Cardiac septum (tissue), 1 donor: ENCODE measurements at regions of chr1 and their contacts with region 1.

Region 1: DNA sequence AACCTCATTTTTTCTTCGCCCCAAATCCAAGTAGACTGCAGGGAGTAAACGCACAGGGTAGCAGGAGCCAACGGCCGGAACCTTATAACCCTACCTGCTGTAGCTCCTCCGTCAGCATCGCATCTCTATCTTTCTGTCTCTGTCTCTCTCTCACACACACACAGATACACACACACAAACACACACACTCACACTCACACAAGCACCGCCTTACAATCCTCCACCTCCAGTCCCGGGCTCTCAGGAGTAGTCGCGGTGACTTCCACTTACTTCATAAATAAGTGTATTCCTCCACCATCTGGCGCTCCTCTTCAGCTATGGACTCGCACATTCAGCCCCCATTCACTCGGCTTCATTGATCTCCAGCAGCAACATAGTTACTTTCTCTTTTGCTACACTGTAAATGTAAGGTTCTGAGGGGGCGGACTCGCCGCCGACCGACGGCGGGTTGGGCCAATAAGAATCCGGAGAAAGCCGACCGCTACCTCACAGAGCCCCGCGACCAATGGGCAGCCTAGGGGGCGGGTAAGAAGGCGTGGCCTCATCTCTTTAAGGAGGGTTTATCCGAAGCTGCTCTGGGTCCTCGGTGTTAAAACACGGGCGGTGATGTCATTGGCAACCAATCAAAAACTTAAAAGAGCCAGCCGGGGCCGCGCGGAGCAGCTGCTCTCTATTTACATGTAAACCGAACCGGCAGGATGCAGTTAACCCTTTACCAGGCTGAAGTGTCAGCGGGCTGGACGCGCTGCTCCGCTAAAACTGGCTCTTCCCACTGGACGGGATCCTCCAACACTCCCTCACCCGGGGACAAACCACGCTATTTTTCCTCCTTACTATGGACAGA is at the start of gene DUSP10:
- DNase-seq: peak; percentile 99
- total RNA-seq, gene DUSP10: 2.8 TPM

Region 2: DNA sequence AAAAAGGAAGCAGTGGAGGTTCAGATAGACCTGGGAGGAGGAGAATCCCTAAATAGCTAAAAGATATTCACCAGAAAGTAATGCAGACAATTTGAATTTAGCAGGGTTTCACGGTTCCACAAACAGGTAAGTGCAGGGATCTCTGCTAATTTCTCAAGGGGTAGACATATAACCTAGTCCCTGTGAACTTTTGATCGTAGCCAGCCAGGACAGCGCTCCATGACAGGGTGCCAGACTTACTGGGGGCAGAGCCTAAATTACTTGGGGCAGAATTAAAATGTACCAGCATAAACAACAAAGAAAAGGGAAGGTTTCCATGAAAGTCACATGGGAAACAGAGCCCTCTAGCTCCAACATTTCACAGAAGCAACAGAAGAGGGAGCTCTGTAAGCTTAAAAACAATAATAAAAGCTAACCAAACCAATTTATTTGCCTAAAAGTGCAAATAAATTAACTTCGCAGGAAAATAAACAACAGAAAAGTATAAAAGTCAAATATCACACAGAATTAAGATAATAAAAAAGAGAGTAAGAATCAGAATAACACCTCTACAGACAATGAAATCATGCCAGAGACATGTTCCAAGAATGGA is 198.3 kb before region 1 on chr1:
- intact Hi-C with region 1: loop called (anchors 10 kb)
- DNase-seq: no peak

Region 3: GRCh38 chr1:221693087-221693486 is 48.8 kb before region 1 on chr1:
- intact Hi-C with region 1: no loop called
- DNase-seq: no peak

Region 4: GRCh38 chr1:221794079-221794670 is 52.2 kb after region 1 on chr1:
- intact Hi-C with region 1: no loop called
- DNase-seq: no peak

Region 5: GRCh38 chr1:221878134-221878533 is 136.2 kb after region 1 on chr1:
- intact Hi-C with region 1: no loop called
- DNase-seq: no peak

Region 6: GRCh38 chr1:222171005-222171404 is 429.1 kb after region 1 on chr1:
- intact Hi-C with region 1: loop called (anchors 5 kb)
- DNase-seq: no peak

Region 7: DNA sequence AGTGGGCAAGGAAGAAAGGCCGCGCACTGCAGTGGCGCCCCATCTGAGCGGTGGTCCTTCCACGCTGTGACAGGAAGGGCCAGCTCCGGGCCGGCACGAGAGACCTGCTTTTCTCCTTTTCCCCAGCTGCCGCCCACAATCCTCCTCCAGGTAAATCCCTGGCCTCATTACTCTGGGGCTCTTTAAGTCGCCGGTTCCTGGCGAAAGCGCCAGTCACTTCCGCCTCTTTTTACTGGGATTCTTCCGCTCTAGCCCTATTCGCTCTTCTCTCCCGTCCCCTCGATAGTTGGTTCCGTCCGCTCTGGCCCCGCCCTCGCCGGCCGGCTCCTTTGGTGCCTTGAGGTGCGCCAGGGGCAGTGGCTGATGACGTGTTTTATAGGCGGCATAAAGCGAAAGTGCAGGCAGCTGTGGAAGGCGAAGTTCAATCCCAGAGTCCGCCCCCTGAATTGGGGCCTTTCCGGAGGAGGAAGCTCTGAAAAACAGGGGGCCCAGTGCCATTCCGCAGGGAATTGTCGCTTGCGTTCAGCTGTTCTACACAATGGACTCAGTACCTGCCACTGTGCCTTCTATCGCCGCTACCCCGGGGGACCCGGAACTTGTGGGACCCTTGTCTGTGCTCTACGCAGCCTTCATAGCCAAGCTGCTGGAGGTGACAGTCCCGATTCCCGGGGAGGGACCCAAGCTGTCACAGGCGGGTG is 902.2 kb after region 1 on chr1:
- intact Hi-C with region 1: loop called (anchors 10 kb)
- DNase-seq: peak; percentile 99

Region 8: DNA sequence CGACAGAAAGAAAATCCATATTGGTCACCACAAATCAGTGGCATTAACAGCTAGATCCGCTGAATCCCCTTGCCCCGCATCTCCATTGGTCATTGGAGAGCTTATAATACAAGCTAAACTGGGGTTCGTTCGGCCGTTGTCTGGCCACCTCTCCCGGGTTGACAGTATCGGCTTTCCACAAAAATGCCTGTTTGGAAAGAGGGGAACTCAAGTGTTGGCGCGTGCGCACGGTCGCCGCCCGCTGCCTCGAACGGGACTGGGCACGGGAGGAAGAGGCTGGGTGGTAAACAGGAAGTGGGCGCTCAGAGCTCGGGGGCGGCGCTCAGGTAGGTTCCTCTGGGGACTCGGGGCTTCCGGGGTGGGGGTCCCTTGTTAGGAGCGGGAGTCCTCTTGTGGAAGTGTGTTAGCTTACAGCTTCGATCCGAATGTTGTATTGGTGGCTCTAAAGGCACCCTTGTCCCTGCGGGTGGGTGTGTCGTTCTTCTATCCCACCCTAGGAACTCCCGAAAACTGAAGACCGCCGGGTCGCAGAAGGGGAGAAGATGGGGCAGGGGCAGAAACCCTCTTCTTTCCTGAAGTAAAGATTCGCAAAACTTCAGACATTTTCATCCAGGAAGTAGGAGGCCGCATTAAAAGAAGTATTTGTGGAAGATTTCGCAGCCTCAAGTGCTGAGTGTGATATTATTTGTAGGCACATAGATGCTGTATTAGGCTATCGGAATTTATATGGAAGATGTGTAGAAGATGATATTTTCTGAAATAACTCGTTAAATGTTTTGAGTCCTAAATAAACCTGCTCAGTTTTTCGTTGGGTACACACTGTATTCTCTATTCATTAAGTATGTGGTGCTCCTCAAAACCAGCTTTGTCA is 971.4 kb after region 1 on chr1:
- intact Hi-C with region 1: loop called (anchors 5 kb)
- DNase-seq: peak; percentile 96